ENCODE measurements at regions of chrX and their contacts with region 1.

Region 1: GRCh38 chrX:153934473-153935325 is at the start of gene NAA10:
- DNase-seq: peak; percentile 71
- ATAC-seq: peak; percentile 94
- H3K4me3 ChIP-seq: peak within 1 kb of the TSS in 4 of 5 experiments; percentile 37 to 68 (median 56)
- H3K4me3 Mint-ChIP-seq: peak within 1 kb of the TSS; percentile 90
- H3K27ac ChIP-seq: peak within 1 kb of the TSS in 1 of 2 donors; percentile 61
- H3K27ac Mint-ChIP-seq: peak within 1 kb of the TSS; percentile 81
- H3K4me1 ChIP-seq: peaks cover 6 to 16% of the 10 kb centered on the region in 2 donors
- H3K4me1 Mint-ChIP-seq: peaks cover 12% of the 10 kb centered on the region
- H3K27me3 ChIP-seq: no peaks in the 10 kb centered on the region
- H3K27me3 Mint-ChIP-seq: no peaks in the 10 kb centered on the region
- CTCF ChIP-seq: no peak
- total RNA-seq, gene NAA10: 78.3 and 87.3 TPM in 2 replicates

Region 2: DNA sequence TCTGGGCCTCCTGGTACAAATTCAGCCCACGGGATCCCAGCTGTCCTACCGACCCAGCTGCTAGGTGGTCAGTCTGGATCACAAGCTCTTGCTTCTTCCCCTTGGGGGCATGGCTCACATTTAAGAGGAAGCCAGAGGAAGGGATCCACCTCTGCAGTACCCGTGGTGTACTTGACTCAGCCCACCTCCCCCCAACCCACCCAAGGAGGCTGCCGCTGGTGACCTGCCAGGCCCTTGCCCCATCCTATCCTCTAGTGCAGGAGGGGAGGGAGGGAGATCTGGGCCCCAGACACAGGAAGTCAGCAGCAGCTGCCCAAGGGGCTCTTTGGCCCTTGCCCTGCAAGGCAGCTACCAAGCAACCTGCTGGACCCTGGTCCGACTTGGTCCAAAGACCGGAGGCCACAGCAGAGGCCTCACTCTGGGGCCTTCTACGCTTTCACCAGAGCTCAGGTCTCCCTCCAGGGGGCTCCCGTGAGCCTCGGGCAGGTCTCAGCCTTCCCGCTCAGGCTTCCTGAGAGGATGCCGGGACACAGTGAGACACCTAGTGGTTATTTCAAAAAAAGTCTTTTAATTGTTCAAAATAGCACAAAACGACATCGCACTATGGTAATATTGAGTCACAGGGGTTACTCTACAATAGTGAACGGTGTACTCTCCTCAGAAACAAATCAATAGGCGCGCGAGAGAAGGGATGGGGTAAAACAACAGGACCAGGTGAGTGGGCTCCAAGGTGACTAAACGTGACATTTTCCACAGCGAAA is 12.5 kb after region 1 on chrX:
- CTCF ChIA-PET with region 1: interaction called, 325 read pairs
- POLR2A ChIA-PET with region 1: interaction called, 5 read pairs
- intact Hi-C with region 1: no loop called
- DNase-seq: peak; percentile 83
- ATAC-seq: peak; percentile 88
- H3K4me3 ChIP-seq: no peak overlapping the region
- H3K4me3 Mint-ChIP-seq: no peak overlapping the region
- H3K27ac ChIP-seq: no peak overlapping the region
- H3K27ac Mint-ChIP-seq: peak overlapping the region; percentile 34
- H3K4me1 ChIP-seq: peaks cover 9 to 39% of the 10 kb centered on the region in 2 donors
- H3K4me1 Mint-ChIP-seq: peaks cover 15% of the 10 kb centered on the region
- H3K27me3 ChIP-seq: no peaks in the 10 kb centered on the region
- H3K27me3 Mint-ChIP-seq: no peaks in the 10 kb centered on the region
- CTCF ChIP-seq: peak; percentile 80